Vagina (tissue), 2 donors: ENCODE measurements at regions of chr19 and their contacts with region 1.

Region 1: DNA sequence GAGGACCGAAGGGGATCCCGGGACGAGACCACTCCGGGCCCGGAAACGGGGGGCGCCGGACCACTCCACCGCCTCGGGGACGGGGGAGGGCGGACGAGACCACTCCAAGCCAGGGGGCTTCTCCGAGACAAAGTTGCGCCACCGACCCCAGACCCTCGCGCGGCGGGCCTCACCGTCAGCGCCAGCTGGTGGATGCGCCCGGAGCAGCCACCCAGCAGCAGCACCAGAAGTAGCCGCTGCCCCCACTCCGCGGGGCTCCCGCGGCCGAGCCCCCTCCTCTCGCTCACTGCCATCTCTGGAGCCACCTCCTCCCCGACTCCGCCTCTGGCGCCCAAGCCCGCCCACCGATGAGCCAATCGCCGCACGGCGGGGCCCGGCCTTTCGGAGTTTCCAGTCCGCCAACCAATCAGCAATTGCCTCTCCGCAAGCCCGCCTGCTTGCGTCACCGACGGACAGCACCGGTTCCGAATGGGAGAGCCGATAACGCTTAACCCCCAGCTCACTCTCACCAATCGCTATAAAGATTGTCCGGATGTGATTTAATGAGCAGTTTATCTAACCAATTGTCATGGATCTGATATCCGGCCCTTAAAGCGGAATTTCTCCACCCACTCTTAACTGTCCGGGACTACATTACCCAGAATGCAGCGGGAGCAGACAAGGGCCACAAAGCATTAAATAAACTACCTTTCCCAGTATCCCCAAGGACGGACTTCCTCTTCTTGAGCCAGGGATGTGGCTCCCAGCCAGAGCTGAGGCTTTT is at the start of gene GPR108:
- DNase-seq: peak in 1 of 2 donors; percentile 100
- H3K4me3 ChIP-seq: peak within 1 kb of the TSS; percentile 65 to 99
- H3K27ac ChIP-seq: peak within 1 kb of the TSS; percentile 96
- H3K4me1 ChIP-seq: peaks cover 42% of the 10 kb centered on the region
- H3K27me3 ChIP-seq: no peaks in the 10 kb centered on the region
- CTCF ChIP-seq: no peak
- POLR2A ChIP-seq: peak in 1 of 2 donors; percentile 51
- total RNA-seq, gene GPR108: 62.9 TPM

Region 2: DNA sequence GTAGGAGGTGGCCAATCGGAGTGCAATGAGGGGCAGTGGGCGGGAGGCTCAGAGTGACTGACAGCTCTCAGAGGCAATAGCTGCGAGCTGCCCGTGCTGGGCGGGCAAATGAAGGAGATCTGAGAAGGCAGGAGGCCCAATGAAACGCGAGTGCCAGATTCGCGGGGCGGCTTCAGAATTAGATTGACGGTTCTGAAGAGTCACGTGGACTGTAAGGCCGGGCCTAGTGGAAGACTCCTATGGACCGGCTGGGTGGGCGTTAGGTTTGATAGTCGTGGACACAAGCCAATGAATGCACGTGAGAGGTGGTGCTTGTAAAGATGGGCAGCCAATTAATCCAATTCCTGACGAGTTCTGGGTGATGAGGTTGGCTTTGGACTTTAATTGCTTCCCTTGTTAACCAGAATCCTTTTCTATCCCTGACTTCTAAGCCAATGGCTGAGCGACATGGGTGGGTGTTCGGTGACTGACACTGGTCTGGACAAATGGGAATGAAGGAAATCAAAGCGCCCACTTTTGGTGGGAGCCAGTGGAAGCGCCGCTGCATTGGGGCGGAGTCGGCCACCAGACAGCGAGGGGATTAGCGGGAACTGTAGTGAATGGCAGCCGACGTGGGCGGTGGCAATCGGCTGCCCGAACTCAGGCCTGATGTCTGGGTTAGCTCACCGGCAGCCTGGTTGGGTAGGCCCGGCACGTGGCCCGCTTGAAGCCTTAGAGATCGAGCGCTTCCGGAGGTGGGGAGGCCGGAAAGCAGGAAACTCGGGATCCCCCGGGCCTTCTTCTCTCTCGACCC is 312.3 kb before region 1 on chr19:
- intact Hi-C with region 1: loop called (anchors 5 kb)
- DNase-seq: peak; percentile 100
- H3K4me3 ChIP-seq: peak overlapping the region; percentile 43 to 76
- H3K27ac ChIP-seq: peak overlapping the region; percentile 82
- H3K4me1 ChIP-seq: peaks cover 38% of the 10 kb centered on the region
- H3K27me3 ChIP-seq: no peaks in the 10 kb centered on the region
- CTCF ChIP-seq: peak in 1 of 3 experiments; percentile 19
- POLR2A ChIP-seq: no peak

Region 3: GRCh38 chr19:6794686-6795431 is 57.4 kb after region 1 on chr19:
- intact Hi-C with region 1: no loop called
- DNase-seq: no peak
- H3K4me3 ChIP-seq: no peak overlapping the region
- H3K27ac ChIP-seq: no peak overlapping the region
- H3K4me1 ChIP-seq: no peaks in the 10 kb centered on the region
- H3K27me3 ChIP-seq: no peaks in the 10 kb centered on the region
- CTCF ChIP-seq: no peak
- POLR2A ChIP-seq: no peak

Region 4: GRCh38 chr19:6862673-6863078 is 125.2 kb after region 1 on chr19:
- intact Hi-C with region 1: loop called (anchors 10 kb)
- DNase-seq: no peak
- H3K4me3 ChIP-seq: peak overlapping the region; percentile 37 to 38
- H3K27ac ChIP-seq: no peak overlapping the region
- H3K4me1 ChIP-seq: peaks cover 12% of the 10 kb centered on the region
- H3K27me3 ChIP-seq: no peaks in the 10 kb centered on the region
- CTCF ChIP-seq: peak; percentile 73 to 85 (median 83)
- POLR2A ChIP-seq: no peak